ENCODE measurements at regions of chr4 and their contacts with region 1.

Region 1: GRCh38 chr4:114386637-114387233 is 211.9 kb upstream of the UGT8 start:
- DNase-seq: peak; percentile 38
- ATAC-seq: peak; percentile 53
- H3K4me3 ChIP-seq: no peak overlapping the region
- H3K27ac ChIP-seq: no peak overlapping the region
- H3K4me1 ChIP-seq: peaks cover 0 to 13% of the 10 kb centered on the region in 2 experiments; a peak in 2 of 4 replicates
- H3K27me3 ChIP-seq: no peaks in the 10 kb centered on the region
- CTCF ChIP-seq: peak; percentile 44 to 82 (median 76)
- POLR2A ChIP-seq: no peak
- RAD21 ChIP-seq: peak; percentile 91

Region 2: GRCh38 chr4:112765317-112765975 is 1621.3 kb before region 1 on chr4:
- CTCF ChIA-PET with region 1: no interaction called
- POLR2A ChIA-PET with region 1: no interaction called
- RAD21 ChIA-PET with region 1: no interaction called
- intact Hi-C with region 1: loop called (anchors 10 kb)
- DNase-seq: peak; percentile 43
- ATAC-seq: peak; percentile 83
- H3K4me3 ChIP-seq: no peak overlapping the region
- H3K27ac ChIP-seq: no peak overlapping the region
- H3K4me1 ChIP-seq: peaks cover 0 to 8% of the 10 kb centered on the region in 2 experiments; a peak in 2 of 4 replicates
- H3K27me3 ChIP-seq: no peaks in the 10 kb centered on the region
- CTCF ChIP-seq: peak; percentile 44 to 66 (median 53); a peak in 5 of 6 replicates
- POLR2A ChIP-seq: no peak
- RAD21 ChIP-seq: peak; percentile 64

Region 3: DNA sequence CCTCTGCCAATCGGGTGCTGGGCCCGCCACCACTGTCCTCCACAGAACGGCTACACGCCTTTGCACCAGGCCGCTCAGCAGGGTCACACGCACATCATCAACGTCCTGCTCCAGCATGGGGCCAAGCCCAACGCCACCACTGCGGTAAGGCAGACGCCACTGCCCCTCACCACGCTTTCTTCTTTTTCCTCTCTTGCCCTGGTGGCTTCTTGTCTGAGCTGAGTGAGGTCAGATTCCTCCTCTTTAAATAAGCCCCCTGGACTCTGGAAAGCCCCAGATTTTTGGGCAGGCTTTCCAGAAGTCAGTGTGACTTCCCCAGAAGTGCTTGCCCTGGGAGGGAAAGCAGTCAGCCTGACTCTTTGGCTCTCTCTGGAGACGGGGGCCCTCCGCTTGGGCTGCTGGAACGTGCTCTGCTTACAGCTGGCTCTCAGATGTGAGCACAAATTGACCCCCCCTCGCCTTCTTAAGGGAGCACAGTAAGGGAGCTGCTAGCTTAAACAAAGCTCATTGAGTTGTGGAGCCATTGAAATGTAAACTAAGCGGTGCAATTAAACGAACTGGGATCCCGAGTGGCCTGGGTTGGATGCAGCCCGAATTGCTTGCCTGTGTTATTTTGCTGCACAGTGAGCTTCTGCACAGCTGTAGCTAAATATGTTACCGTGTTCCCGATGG is 1094.2 kb before region 1 on chr4:
- CTCF ChIA-PET with region 1: no interaction called
- POLR2A ChIA-PET with region 1: no interaction called
- RAD21 ChIA-PET with region 1: no interaction called
- intact Hi-C with region 1: loop called (anchors 5 kb)
- DNase-seq: no peak
- ATAC-seq: no peak
- H3K4me3 ChIP-seq: no peak overlapping the region
- H3K27ac ChIP-seq: no peak overlapping the region
- H3K4me1 ChIP-seq: no peaks in the 10 kb centered on the region
- H3K27me3 ChIP-seq: no peaks in the 10 kb centered on the region
- CTCF ChIP-seq: no peak
- POLR2A ChIP-seq: no peak
- RAD21 ChIP-seq: no peak

Region 4: GRCh38 chr4:113547487-113548042 is 839.2 kb before region 1 on chr4:
- CTCF ChIA-PET with region 1: no interaction called
- POLR2A ChIA-PET with region 1: no interaction called
- RAD21 ChIA-PET with region 1: no interaction called
- intact Hi-C with region 1: loop called (anchors 10 kb)
- DNase-seq: peak; percentile 95
- ATAC-seq: peak; percentile 100
- H3K4me3 ChIP-seq: no peak overlapping the region
- H3K27ac ChIP-seq: no peak overlapping the region
- H3K4me1 ChIP-seq: peaks cover 6 to 13% of the 10 kb centered on the region in 2 experiments; a peak in 3 of 4 replicates
- H3K27me3 ChIP-seq: no peaks in the 10 kb centered on the region
- CTCF ChIP-seq: peak; percentile 81 to 98 (median 96)
- POLR2A ChIP-seq: no peak
- RAD21 ChIP-seq: peak; percentile 85

Region 5: GRCh38 chr4:113564493-113564892 is 822.2 kb before region 1 on chr4:
- CTCF ChIA-PET with region 1: no interaction called
- POLR2A ChIA-PET with region 1: no interaction called
- RAD21 ChIA-PET with region 1: no interaction called
- intact Hi-C with region 1: no loop called
- DNase-seq: no peak
- ATAC-seq: no peak
- H3K4me3 ChIP-seq: no peak overlapping the region
- H3K27ac ChIP-seq: no peak overlapping the region
- H3K4me1 ChIP-seq: peaks cover 22 to 44% of the 10 kb centered on the region in 2 experiments; a peak in 3 of 4 replicates
- H3K27me3 ChIP-seq: no peaks in the 10 kb centered on the region
- CTCF ChIP-seq: no peak
- POLR2A ChIP-seq: no peak
- RAD21 ChIP-seq: no peak

Region 6: GRCh38 chr4:113952452-113953029 is 434.2 kb before region 1 on chr4:
- CTCF ChIA-PET with region 1: interaction called, 8 read pairs
- POLR2A ChIA-PET with region 1: no interaction called
- RAD21 ChIA-PET with region 1: interaction called in 1 of 2 experiments, 4 read pairs
- intact Hi-C with region 1: loop called (anchors 2 kb)
- DNase-seq: peak; percentile 64
- ATAC-seq: peak; percentile 95
- H3K4me3 ChIP-seq: no peak overlapping the region
- H3K27ac ChIP-seq: no peak overlapping the region
- H3K4me1 ChIP-seq: peaks cover under 1 to 15% of the 10 kb centered on the region in 2 experiments; a peak in 2 of 4 replicates
- H3K27me3 ChIP-seq: no peaks in the 10 kb centered on the region
- CTCF ChIP-seq: peak; percentile 79 to 89 (median 82)
- POLR2A ChIP-seq: no peak
- RAD21 ChIP-seq: peak; percentile 89

Region 7: GRCh38 chr4:114694770-114695169 is 308.0 kb after region 1 on chr4:
- CTCF ChIA-PET with region 1: interaction called, 21 read pairs
- POLR2A ChIA-PET with region 1: no interaction called
- RAD21 ChIA-PET with region 1: interaction called in 1 of 2 experiments, 3 read pairs
- intact Hi-C with region 1: loop called (anchors 1 kb)
- DNase-seq: peak; percentile 28
- ATAC-seq: peak; percentile 64
- H3K4me3 ChIP-seq: no peak overlapping the region
- H3K27ac ChIP-seq: no peak overlapping the region
- H3K4me1 ChIP-seq: no peaks in the 10 kb centered on the region
- H3K27me3 ChIP-seq: no peaks in the 10 kb centered on the region
- CTCF ChIP-seq: peak; percentile 33 to 62 (median 57); a peak in 4 of 6 replicates
- POLR2A ChIP-seq: no peak
- RAD21 ChIP-seq: peak; percentile 79

Measured in HCT116 (cell line).